ENCODE measurements at regions of chr7 and their contacts with region 1.

Region 1: DNA sequence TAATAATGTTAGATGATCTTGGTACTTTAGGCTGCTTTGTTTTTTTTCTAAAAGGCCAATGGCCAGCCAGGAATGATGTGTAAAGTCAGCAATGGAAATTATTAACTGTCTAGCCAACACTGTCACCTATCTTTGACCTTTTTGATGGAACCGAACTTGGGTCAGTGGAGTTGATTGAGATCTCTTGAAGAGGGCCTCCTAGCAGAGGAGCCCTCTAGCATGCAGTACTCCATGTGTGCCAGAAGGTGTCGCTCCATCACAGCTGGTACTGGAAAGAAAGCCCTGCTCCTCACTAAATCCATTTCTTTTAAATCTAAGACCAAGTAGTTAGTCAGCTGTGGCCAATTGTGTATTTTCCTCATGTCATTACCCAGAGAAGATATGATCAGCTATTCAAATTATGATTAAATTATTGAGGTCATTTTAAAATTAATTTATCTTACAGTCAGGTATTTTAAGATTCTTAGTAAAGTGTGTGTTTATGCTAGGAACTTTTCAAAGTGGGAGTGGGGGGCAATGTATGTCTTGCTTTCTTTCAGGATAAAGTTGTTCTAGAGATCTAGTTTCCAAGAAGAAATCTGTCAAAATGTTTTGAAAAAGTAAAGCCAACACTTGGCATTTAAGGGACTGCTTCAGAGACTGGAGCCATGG is 33.1 kb upstream of the CROT start:
- DNase-seq: peak; percentile 50 to 66
- H3K4me3 ChIP-seq: no peak overlapping the region
- H3K27ac ChIP-seq: no peak overlapping the region
- H3K4me1 ChIP-seq: no peaks in the 10 kb centered on the region
- H3K27me3 ChIP-seq: no peaks in the 10 kb centered on the region
- CTCF ChIP-seq: peak; percentile 94 to 99 (median 96)
- POLR2A ChIP-seq: no peak

Region 2: GRCh38 chr7:87199241-87199640 is 113.1 kb before region 1 on chr7:
- intact Hi-C with region 1: no loop called
- DNase-seq: no peak
- H3K4me3 ChIP-seq: no peak overlapping the region
- H3K27ac ChIP-seq: peak overlapping the region in 2 of 3 donors; percentile 15 to 41
- H3K4me1 ChIP-seq: peaks cover 37 to 47% of the 10 kb centered on the region in 2 donors
- H3K27me3 ChIP-seq: no peaks in the 10 kb centered on the region
- CTCF ChIP-seq: no peak
- POLR2A ChIP-seq: no peak

Region 3: DNA sequence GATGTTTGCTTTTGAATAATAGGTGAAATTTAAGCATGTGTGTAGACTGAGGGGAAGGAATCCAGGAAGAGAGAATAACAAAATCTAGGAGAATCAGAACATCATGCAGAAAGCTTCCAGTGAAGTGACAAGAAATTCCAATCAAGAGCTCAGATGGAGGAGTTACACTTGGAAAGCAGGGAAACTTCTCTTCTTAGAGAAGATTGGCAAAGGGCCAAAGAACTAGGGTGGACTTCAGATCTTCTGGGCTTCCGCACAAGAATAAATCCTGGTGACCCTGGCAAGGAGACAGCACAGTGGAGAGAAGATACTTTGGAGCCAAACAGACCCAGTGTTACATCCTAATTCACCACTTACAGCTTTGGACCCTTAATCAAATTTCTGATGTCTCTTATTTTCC is 60.2 kb before region 1 on chr7:
- intact Hi-C with region 1: no loop called
- DNase-seq: no peak
- H3K4me3 ChIP-seq: no peak overlapping the region
- H3K27ac ChIP-seq: no peak overlapping the region
- H3K4me1 ChIP-seq: no peaks in the 10 kb centered on the region
- H3K27me3 ChIP-seq: no peaks in the 10 kb centered on the region
- CTCF ChIP-seq: no peak
- POLR2A ChIP-seq: no peak

Region 4: GRCh38 chr7:87416682-87417587 is 104.6 kb after region 1 on chr7:
- intact Hi-C with region 1: loop called (anchors 2 kb)
- DNase-seq: peak; percentile 53 to 57
- H3K4me3 ChIP-seq: no peak overlapping the region
- H3K27ac ChIP-seq: no peak overlapping the region
- H3K4me1 ChIP-seq: peaks cover 3 to 15% of the 10 kb centered on the region in 2 donors
- H3K27me3 ChIP-seq: no peaks in the 10 kb centered on the region
- CTCF ChIP-seq: peak in 5 of 6 experiments; percentile 44 to 83 (median 66)
- POLR2A ChIP-seq: no peak

Region 5: GRCh38 chr7:87474533-87475358 is 162.4 kb after region 1 on chr7:
- intact Hi-C with region 1: no loop called
- DNase-seq: no peak
- H3K4me3 ChIP-seq: peak overlapping the region in 2 of 3 donors; percentile 10 to 25
- H3K27ac ChIP-seq: peak overlapping the region in 1 of 3 donors; percentile 8
- H3K4me1 ChIP-seq: no peaks in the 10 kb centered on the region
- H3K27me3 ChIP-seq: no peaks in the 10 kb centered on the region
- CTCF ChIP-seq: no peak
- POLR2A ChIP-seq: no peak

Measured in thyroid gland (tissue), 4 donors.